B cell (primary cell): ENCODE measurements at regions of chr11 and their contacts with region 1.

Region 1: DNA sequence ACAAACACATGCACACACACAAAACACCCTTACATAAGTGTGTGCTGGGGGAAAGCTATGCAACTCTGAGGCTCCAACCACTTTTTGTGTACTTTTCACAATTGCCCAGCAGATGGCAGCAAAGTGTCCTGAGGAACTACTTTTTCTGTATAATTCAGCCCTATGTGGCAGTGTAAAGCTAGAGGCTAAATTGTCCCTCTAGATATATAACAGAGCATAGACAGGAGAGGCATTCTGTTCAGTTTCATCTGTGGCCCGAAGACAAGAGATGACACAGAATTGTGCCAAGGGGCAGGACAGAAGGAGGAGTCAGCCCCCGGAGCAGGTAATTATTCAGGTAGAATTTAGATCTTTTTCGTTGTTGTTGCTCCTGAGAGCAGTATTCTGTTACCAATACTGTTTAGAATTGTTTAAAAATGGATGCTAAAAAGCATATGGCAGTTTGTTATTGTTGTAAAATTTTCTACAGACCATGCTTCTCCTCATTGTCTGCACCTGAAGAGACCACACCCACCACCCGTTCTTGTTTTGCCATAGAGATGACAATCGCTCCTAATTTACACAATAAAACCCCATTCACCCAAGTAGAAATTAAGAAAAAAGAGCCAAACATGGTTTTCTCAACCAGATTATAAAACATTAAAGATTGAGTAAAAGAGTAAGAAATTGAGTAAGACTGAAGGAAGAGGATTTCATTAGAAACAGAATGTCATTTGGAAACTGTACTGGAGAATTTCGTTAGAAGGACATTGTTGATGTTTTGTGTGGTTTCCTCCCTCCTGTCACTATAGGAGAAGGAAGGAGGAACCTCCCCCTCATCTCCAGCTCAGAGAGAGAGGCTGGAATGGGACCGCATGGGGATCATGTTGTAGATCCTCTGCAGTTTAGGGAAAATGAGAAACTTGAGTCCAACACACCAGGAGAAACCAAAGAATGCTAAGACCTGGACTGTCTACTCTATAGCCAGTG is 14.5 kb upstream of the MS4A7 start:
- DNase-seq: peak; percentile 92
- ATAC-seq: peak; percentile 81
- H3K4me3 ChIP-seq: peak overlapping the region; percentile 37 to 72 (median 52)
- H3K4me3 Mint-ChIP-seq: peak overlapping the region; percentile 80
- H3K27ac ChIP-seq: peak overlapping the region; percentile 82 to 92
- H3K27ac Mint-ChIP-seq: peak overlapping the region; percentile 90
- H3K4me1 ChIP-seq: peaks cover 60 to 62% of the 10 kb centered on the region in 2 donors
- H3K4me1 Mint-ChIP-seq: peaks cover 71% of the 10 kb centered on the region
- H3K27me3 ChIP-seq: no peaks in the 10 kb centered on the region
- H3K27me3 Mint-ChIP-seq: no peaks in the 10 kb centered on the region
- CTCF ChIP-seq: peak; percentile 88

Region 2: GRCh38 chr11:58938398-58938797 is 1425.4 kb before region 1 on chr11:
- CTCF ChIA-PET with region 1: no interaction called
- POLR2A ChIA-PET with region 1: no interaction called
- intact Hi-C with region 1: no loop called
- DNase-seq: no peak
- ATAC-seq: no peak
- H3K4me3 ChIP-seq: no peak overlapping the region
- H3K4me3 Mint-ChIP-seq: no peak overlapping the region
- H3K27ac ChIP-seq: no peak overlapping the region
- H3K27ac Mint-ChIP-seq: no peak overlapping the region
- H3K4me1 ChIP-seq: no peaks in the 10 kb centered on the region
- H3K4me1 Mint-ChIP-seq: no peaks in the 10 kb centered on the region
- H3K27me3 ChIP-seq: no peaks in the 10 kb centered on the region
- H3K27me3 Mint-ChIP-seq: peaks cover 3% of the 10 kb centered on the region
- CTCF ChIP-seq: no peak

Region 3: DNA sequence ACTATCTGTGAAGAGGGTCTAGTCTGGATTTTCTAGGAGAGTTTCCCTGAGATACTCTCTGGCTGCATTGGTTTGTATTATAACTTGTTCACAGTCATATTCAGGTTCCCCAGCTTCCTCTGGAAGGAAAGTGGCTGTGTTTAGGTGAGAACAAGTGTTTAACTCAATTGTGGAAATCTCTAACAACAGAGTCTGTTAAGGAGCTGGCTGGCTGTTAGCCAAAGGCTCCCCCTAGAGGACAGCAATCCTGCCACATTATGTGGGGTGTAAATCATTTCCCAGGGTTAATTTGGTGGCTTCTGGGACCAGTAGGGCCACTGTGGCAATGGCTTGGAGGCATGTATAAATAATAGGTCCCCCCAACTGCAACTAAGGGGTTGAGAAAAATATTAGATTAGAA is 18.3 kb before region 1 on chr11:
- CTCF ChIA-PET with region 1: interaction called, 146 read pairs
- POLR2A ChIA-PET with region 1: no interaction called
- intact Hi-C with region 1: loop called (anchors 2 kb)
- DNase-seq: peak; percentile 57
- ATAC-seq: no peak
- H3K4me3 ChIP-seq: no peak overlapping the region
- H3K4me3 Mint-ChIP-seq: no peak overlapping the region
- H3K27ac ChIP-seq: no peak overlapping the region
- H3K27ac Mint-ChIP-seq: peak overlapping the region; percentile 55
- H3K4me1 ChIP-seq: peaks cover 22 to 26% of the 10 kb centered on the region in 2 donors
- H3K4me1 Mint-ChIP-seq: peaks cover 24% of the 10 kb centered on the region
- H3K27me3 ChIP-seq: no peaks in the 10 kb centered on the region
- H3K27me3 Mint-ChIP-seq: no peaks in the 10 kb centered on the region
- CTCF ChIP-seq: peak; percentile 72

Region 4: GRCh38 chr11:60447846-60448245 is 84.0 kb after region 1 on chr11:
- CTCF ChIA-PET with region 1: interaction called, 7 read pairs
- POLR2A ChIA-PET with region 1: interaction called, 3 read pairs
- intact Hi-C with region 1: loop called (anchors 1 kb)
- DNase-seq: no peak
- ATAC-seq: no peak
- H3K4me3 ChIP-seq: no peak overlapping the region
- H3K4me3 Mint-ChIP-seq: no peak overlapping the region
- H3K27ac ChIP-seq: no peak overlapping the region
- H3K27ac Mint-ChIP-seq: peak overlapping the region; percentile 58
- H3K4me1 ChIP-seq: peaks cover 34% of the 10 kb centered on the region in 2 donors
- H3K4me1 Mint-ChIP-seq: peaks cover 59% of the 10 kb centered on the region
- H3K27me3 ChIP-seq: no peaks in the 10 kb centered on the region
- H3K27me3 Mint-ChIP-seq: no peaks in the 10 kb centered on the region
- CTCF ChIP-seq: no peak

Region 5: GRCh38 chr11:60477035-60477445 is 113.2 kb after region 1 on chr11:
- CTCF ChIA-PET with region 1: interaction called, 162 read pairs
- POLR2A ChIA-PET with region 1: interaction called, 15 read pairs
- intact Hi-C with region 1: loop called (anchors 2 kb)
- DNase-seq: peak; percentile 92
- ATAC-seq: peak; percentile 95
- H3K4me3 ChIP-seq: peak overlapping the region in 1 of 5 experiments; percentile 16
- H3K4me3 Mint-ChIP-seq: peak overlapping the region; percentile 69
- H3K27ac ChIP-seq: peak overlapping the region; percentile 78 to 88
- H3K27ac Mint-ChIP-seq: peak overlapping the region; percentile 78
- H3K4me1 ChIP-seq: peaks cover 43 to 55% of the 10 kb centered on the region in 2 donors
- H3K4me1 Mint-ChIP-seq: peaks cover 66% of the 10 kb centered on the region
- H3K27me3 ChIP-seq: no peaks in the 10 kb centered on the region
- H3K27me3 Mint-ChIP-seq: no peaks in the 10 kb centered on the region
- CTCF ChIP-seq: no peak

Region 6: GRCh38 chr11:60570970-60571369 is 207.1 kb after region 1 on chr11:
- CTCF ChIA-PET with region 1: interaction called, 3 read pairs
- POLR2A ChIA-PET with region 1: no interaction called
- intact Hi-C with region 1: loop called (anchors 5 kb)
- DNase-seq: peak; percentile 72
- ATAC-seq: peak; percentile 82
- H3K4me3 ChIP-seq: no peak overlapping the region
- H3K4me3 Mint-ChIP-seq: no peak overlapping the region
- H3K27ac ChIP-seq: no peak overlapping the region
- H3K27ac Mint-ChIP-seq: peak overlapping the region; percentile 16
- H3K4me1 ChIP-seq: peaks cover 8 to 17% of the 10 kb centered on the region in 2 donors
- H3K4me1 Mint-ChIP-seq: peaks cover 19% of the 10 kb centered on the region
- H3K27me3 ChIP-seq: no peaks in the 10 kb centered on the region
- H3K27me3 Mint-ChIP-seq: no peaks in the 10 kb centered on the region
- CTCF ChIP-seq: no peak